Posterior vena cava (tissue), 2 donors: ENCODE measurements at regions of chr9 and their contacts with region 1.

Region 1: DNA sequence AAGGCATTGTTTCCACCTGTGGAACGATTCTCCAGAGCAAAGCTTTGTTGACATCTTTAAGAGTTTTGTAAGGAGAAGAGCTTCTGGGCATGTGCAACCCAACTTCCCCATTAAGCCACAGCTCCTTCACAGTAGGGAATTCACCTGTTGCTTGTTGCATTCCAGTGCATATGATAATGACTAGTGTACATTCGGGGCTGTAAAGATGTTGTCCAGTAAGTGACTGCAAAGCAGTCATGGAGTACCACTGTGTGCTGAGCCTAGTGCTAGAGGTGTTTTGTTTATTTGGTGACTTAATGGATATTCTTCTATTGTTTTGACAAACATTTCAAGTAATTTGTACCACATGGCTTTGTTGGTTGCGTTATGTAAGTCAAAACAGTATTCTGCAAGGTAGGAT is 12.8 kb downstream of the UGCG start:
- DNase-seq: no peak

Region 2: GRCh38 chr9:112059145-112059965 is 149.9 kb after region 1 on chr9:
- intact Hi-C with region 1: loop called in 1 of 2 experiments (anchors 10 kb)
- DNase-seq: no peak